H1 (cell line): ENCODE measurements at regions of chr5 and their contacts with region 1.

Region 1: DNA sequence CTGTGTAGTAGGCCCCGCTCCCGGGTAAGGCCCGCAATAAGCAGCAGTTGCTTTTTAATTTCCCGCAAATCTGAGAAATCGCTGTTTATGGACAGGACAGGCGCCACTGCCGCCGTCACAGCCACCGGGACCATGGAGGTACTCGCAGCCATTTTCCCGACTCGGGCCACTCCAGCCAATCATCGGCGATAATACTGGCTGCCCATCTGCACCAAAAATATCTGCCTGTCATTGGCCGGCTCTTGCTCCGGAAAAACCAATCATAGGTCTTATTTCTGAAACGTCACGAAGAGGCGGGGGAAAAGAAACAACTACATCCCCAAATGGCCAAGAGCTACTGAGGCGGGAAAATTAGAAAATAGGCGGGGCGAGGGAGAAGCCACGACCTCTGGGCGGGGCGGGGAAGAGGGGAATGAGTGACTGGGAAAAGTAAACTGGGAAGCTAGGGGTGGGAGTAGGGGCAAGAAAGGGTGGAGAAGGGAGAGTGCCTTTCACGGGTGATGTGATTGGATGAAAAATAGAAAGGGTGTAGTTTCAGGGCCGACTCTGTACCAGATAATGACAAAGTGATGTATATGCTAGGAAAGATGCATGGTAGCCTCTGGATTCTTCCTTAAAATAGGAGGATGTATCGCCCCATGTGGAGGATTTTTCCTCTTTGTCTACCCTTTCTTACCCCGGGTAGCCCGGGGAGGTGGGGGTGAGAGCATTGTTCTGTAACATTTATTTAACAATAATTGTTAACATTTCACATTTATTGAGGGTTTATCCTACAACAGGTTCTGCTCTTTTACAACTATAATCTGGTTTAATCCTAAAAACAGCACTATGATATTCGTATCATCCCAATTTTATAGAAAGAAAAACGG is at the start of gene CDC23:
- DNase-seq: peak; percentile 90 to 94
- H3K4me3 ChIP-seq: peak within 1 kb of the TSS; percentile 86 to 100 (median 92)
- H3K27ac ChIP-seq: peak within 1 kb of the TSS; percentile 87
- H3K4me1 ChIP-seq: peaks cover 0 to 4% (median 0%) of the 10 kb centered on the region in 4 experiments; a peak in 1 of 7 replicates
- H3K27me3 ChIP-seq: no peaks in the 10 kb centered on the region
- CTCF ChIP-seq: no peak
- EP300 ChIP-seq: no peak
- POLR2A ChIP-seq: peak; percentile 69 to 89
- RAD21 ChIP-seq: no peak
- total RNA-seq, gene CDC23: 43.6 and 45.7 TPM in 2 replicates

Region 2: GRCh38 chr5:138178516-138179276 is 34.7 kb before region 1 on chr5 and contains the starts of genes BRD8 and KIF20A:
- CTCF ChIA-PET with region 1: interaction called, 5 read pairs
- POLR2A ChIA-PET with region 1: interaction called, 24 read pairs
- DNase-seq: peak; percentile 86 to 90
- H3K4me3 ChIP-seq: peak within 1 kb of the TSS; percentile 91 to 100 (median 96)
- H3K27ac ChIP-seq: peak within 1 kb of the TSS; percentile 91
- H3K4me1 ChIP-seq: no peaks in the 10 kb centered on the region; a peak in 2 of 7 replicates
- H3K27me3 ChIP-seq: no peaks in the 10 kb centered on the region
- CTCF ChIP-seq: no peak
- EP300 ChIP-seq: no peak
- POLR2A ChIP-seq: peak; percentile 82 to 84
- RAD21 ChIP-seq: no peak
- total RNA-seq, gene BRD8: 75.8 and 78.5 TPM in 2 replicates
- total RNA-seq, gene KIF20A: 67.1 and 68.1 TPM in 2 replicates

Region 3: DNA sequence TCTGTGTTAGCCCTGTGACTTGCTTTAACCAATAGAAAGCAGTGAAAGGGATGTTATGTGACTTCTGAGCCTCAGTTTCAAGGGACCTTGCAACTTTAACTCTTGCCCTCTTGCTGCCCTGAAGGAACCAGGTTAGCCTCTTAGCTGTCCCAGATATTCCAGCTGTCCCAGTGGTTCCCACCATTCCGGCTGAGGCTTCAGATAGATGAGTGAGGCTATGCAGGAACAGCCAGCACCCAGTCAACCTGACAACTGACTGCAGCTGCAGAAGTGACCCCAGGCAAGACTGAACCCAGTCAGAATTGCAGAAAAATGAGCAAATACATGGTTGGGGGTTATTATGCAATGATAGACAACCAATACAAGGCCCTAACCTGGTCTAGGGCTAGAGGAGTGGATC is 10.1 kb after region 1 on chr5:
- CTCF ChIA-PET with region 1: interaction called, 13 read pairs
- POLR2A ChIA-PET with region 1: interaction called, 13 read pairs
- DNase-seq: no peak
- H3K4me3 ChIP-seq: no peak overlapping the region
- H3K27ac ChIP-seq: no peak overlapping the region
- H3K4me1 ChIP-seq: no peaks in the 10 kb centered on the region
- H3K27me3 ChIP-seq: no peaks in the 10 kb centered on the region; a peak in 1 of 7 replicates
- CTCF ChIP-seq: no peak
- EP300 ChIP-seq: no peak
- POLR2A ChIP-seq: no peak
- RAD21 ChIP-seq: no peak

Region 4: DNA sequence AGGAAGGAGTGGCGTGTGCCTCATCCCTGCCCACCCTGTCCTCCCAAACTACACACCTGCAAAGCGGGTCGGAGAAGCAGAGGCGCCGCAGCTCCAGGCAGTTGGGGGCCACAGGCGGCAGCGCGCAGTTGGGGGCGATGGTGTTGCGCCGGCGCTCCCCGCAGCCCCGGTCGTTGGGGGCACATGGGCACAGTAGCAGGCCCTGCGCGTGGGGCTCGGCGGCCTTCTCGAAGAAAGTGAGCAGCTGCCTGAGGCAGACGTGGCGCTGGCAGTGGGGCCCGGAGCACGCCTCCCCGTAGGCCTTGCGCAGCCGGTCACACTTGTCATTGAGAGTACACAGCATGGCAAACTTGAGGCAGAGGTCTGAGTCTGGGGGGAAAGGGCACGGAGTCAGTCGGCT is 44.2 kb after region 1 on chr5:
- CTCF ChIA-PET with region 1: no interaction called
- POLR2A ChIA-PET with region 1: no interaction called
- DNase-seq: no peak
- H3K4me3 ChIP-seq: no peak overlapping the region
- H3K27ac ChIP-seq: no peak overlapping the region
- H3K4me1 ChIP-seq: no peaks in the 10 kb centered on the region; a peak in 1 of 7 replicates
- H3K27me3 ChIP-seq: no peaks in the 10 kb centered on the region
- CTCF ChIP-seq: no peak
- EP300 ChIP-seq: no peak
- POLR2A ChIP-seq: no peak
- RAD21 ChIP-seq: no peak

Region 5: DNA sequence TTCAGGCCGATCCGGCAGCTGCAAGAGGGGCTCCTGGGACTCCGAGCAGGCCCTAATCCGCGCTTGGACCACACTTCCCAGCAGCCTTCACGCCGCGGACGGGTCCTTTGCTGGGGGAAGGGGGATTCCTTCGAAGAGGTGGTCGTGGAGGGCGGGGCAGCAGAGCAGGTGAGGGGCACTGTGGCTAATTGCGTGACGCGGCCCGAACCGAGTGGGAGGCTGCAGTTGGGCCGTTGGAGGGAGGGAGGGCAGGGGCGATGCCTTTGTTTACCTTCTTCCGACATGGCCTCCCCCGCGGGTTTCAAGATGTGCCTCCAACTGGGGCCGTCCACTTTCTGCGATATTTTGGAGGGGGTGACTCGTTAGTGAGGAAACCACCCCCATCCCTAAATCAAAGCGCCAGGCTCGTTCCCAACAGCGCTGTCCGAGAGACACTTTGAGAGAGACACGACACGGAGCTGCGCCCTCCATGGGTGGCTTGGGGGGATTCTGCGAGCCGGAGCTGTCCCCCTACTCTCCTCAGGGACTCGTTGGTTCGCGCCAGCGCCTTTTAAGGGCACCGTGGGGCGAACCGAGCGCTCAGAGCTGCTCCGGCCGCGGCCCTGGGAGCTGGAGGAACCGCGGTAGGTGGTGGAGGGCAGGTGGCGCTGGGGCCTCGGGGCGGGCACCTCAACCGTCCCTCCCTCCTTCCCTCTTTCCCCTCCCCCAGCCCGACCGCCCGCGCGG is 124.5 kb after region 1 on chr5 and contains the start of gene FAM53C:
- CTCF ChIA-PET with region 1: no interaction called
- POLR2A ChIA-PET with region 1: interaction called, 30 read pairs
- DNase-seq: peak; percentile 71 to 98
- H3K4me3 ChIP-seq: peak within 1 kb of the TSS; percentile 68 to 95 (median 91)
- H3K27ac ChIP-seq: peak within 1 kb of the TSS; percentile 100
- H3K4me1 ChIP-seq: peaks cover 0 to 5% (median 2%) of the 10 kb centered on the region in 4 experiments; a peak in 3 of 7 replicates
- H3K27me3 ChIP-seq: no peaks in the 10 kb centered on the region
- CTCF ChIP-seq: no peak
- EP300 ChIP-seq: peak in 1 of 2 experiments; percentile 98; a peak in 2 of 3 replicates
- POLR2A ChIP-seq: peak; percentile 99 to 100
- RAD21 ChIP-seq: no peak
- total RNA-seq, gene FAM53C: 57.6 and 58.9 TPM in 2 replicates

Region 6: GRCh38 chr5:138565100-138565821 is 351.9 kb after region 1 on chr5:
- CTCF ChIA-PET with region 1: no interaction called
- POLR2A ChIA-PET with region 1: no interaction called
- DNase-seq: no peak
- H3K4me3 ChIP-seq: no peak overlapping the region
- H3K27ac ChIP-seq: no peak overlapping the region
- H3K4me1 ChIP-seq: no peaks in the 10 kb centered on the region
- H3K27me3 ChIP-seq: no peaks in the 10 kb centered on the region
- CTCF ChIP-seq: no peak
- EP300 ChIP-seq: no peak
- POLR2A ChIP-seq: no peak; a peak in 1 of 3 replicates
- RAD21 ChIP-seq: no peak